ENCODE measurements at regions of chr11 and their contacts with region 1.

Region 1: DNA sequence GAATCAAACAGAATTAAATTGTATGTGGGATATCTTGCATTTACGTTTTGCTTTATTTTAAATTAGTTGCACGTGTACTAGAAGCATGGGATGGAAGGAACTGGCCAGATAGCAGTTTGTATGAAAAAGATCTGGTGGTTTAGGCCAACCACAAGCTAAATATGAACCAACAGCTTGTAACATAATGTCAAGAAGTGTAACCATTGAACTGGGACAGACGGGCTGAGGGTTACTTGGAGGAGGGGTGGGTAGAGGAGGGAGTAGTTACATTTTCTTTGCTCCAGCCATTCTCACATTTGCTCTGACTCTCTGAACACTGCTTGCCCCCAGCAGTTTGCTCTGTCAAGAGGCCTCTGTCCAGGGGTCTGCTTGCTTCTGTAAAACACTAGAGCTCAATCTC is 31.7 kb upstream of the CXCR5 start:
- DNase-seq: no peak
- H3K4me3 ChIP-seq: no peak overlapping the region
- H3K27ac ChIP-seq: no peak overlapping the region
- H3K4me1 ChIP-seq: no peaks in the 10 kb centered on the region
- H3K27me3 ChIP-seq: no peaks in the 10 kb centered on the region
- CTCF ChIP-seq: no peak
- EP300 ChIP-seq: no peak
- POLR2A ChIP-seq: no peak

Region 2: GRCh38 chr11:118807800-118808778 is 43.9 kb before region 1 on chr11:
- intact Hi-C with region 1: loop called in 1 of 4 experiments (anchors 10 kb)
- DNase-seq: no peak
- H3K4me3 ChIP-seq: no peak overlapping the region
- H3K27ac ChIP-seq: no peak overlapping the region
- H3K4me1 ChIP-seq: no peaks in the 10 kb centered on the region
- H3K27me3 ChIP-seq: no peaks in the 10 kb centered on the region
- CTCF ChIP-seq: no peak
- EP300 ChIP-seq: no peak
- POLR2A ChIP-seq: no peak

Region 3: DNA sequence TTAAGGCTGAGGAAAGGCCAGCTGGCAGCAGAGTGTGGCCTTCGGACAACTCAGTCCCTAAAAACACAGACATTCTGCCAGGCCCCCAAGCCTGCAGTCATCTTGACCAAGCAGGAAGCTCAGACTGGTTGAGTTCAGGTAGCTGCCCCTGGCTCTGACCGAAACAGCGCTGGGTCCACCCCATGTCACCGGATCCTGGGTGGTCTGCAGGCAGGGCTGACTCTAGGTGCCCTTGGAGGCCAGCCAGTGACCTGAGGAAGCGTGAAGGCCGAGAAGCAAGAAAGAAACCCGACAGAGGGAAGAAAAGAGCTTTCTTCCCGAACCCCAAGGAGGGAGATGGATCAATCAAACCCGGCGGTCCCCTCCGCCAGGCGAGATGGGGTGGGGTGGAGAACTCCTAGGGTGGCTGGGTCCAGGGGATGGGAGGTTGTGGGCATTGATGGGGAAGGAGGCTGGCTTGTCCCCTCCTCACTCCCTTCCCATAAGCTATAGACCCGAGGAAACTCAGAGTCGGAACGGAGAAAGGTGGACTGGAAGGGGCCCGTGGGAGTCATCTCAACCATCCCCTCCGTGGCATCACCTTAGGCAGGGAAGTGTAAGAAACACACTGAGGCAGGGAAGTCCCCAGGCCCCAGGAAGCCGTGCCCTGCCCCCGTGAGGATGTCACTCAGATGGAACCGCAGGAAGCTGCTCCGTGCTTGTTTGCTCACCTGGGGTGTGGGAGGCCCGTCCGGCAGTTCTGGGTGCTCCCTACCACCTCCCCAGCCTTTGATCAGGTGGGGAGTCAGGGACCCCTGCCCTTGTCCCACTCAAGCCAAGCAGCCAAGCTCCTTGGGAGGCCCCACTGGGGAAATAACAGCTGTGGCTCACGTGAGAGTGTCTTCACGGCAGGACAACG is 43.4 kb after region 1 on chr11:
- intact Hi-C with region 1: no loop called
- DNase-seq: peak in 3 of 5 donors; percentile 25 to 40 (median 35)
- H3K4me3 ChIP-seq: no peak overlapping the region
- H3K27ac ChIP-seq: peak overlapping the region in 1 of 2 donors; percentile 17
- H3K4me1 ChIP-seq: peaks cover 1% of the 10 kb centered on the region
- H3K27me3 ChIP-seq: no peaks in the 10 kb centered on the region
- CTCF ChIP-seq: no peak
- EP300 ChIP-seq: no peak
- POLR2A ChIP-seq: no peak